GM10248 (cell line): ENCODE measurements at regions of chr1 and their contacts with region 1.

Region 1: DNA sequence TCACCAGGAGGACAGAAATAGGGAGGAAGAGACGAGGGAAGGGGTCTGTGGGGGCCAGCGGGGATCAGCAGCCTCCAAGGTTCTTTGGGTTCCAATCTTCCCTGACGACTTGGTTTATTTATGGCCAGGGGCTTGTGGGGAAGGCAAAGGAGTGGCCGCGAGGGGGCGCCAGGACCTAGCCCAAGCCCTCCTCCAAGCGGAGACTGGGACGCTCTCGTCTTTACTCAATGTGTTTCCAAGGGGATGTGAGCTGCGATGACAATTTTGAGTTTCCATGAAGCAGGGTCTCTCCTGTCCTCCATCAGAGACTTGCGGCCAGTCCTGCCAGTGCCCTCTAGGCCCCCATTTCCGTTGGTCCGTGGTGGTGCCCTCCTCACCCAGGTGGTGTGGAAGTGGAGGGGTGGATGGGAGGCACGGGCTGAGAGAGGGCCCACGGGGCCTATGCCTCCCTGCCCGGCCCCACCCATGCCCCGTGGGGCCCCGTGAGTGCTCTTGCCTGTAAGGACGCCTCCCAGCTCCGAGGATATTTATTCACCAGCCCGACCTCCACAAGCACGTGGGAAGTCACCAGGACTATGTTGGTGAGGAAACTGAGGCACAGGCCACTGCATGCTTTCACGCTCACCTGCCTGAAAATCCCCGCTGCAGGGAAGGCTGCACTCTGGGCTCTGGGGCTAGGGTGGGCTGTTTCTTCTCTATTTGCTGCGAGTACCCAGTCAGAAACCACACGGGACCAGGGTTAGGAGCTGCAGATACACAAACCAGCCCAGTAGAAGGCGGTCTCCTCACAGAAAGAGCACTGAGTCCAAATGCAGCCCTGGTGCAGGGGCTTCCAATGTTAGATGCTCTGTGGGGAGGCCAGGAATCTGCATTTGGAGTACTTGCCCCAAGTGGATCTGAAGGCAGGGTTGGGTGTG is 26.5 kb downstream of the DMRTB1 start:
- DNase-seq: peak; percentile 83
- CTCF ChIP-seq: peak; percentile 85

Region 2: GRCh38 chr1:53462769-53463501 is 22.8 kb before region 1 on chr1:
- CTCF ChIA-PET with region 1: interaction called, 13 read pairs
- POLR2A ChIA-PET with region 1: no interaction called
- DNase-seq: peak; percentile 7
- CTCF ChIP-seq: no peak

Region 3: GRCh38 chr1:53681977-53682685 is 196.4 kb after region 1 on chr1:
- CTCF ChIA-PET with region 1: interaction called, 17 read pairs
- POLR2A ChIA-PET with region 1: no interaction called
- DNase-seq: peak; percentile 46
- CTCF ChIP-seq: peak; percentile 31